ENCODE measurements at regions of chr14 and their contacts with region 1.

Region 1: DNA sequence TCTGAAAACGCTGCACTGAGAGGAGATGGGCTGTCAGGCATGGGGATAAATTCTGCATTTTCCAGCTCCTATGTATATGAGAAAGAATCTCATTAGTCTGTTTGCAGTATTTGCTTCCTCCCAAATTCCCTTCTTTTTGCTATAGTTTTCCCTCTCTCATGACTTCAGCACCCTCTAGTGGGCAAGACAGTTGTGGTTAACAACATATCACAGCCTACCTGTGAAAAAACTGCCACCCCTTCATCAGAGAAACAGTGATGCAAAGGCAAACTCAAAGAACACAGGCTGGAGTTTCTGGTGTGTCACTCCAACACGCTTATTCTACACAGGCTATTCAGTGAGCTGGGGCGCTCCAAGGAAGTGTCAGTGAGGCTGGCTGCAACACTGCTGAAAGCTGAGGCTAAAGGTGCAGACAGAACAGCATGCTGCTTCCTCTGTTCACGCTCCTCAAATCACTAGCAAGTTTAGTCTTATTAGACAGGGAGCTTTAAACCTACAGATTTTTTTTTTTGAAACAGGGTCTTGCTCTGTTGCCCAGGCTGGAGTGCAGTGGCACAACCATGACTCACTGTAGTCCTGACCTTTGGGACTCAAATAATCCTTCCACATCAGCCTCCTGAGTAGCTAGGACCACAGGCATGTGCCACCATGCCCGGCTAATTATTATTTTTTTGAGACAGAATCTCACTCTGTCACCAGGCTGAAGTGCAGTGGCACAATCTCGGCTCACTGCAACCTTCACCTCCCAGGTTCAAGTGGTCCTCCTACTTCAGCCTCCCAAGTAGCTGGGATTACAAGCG is 19.3 kb downstream of the ZC2HC1C start:
- DNase-seq: peak; percentile 35
- H3K4me3 Mint-ChIP-seq: no peak overlapping the region
- H3K27ac Mint-ChIP-seq: no peak overlapping the region
- H3K4me1 Mint-ChIP-seq: no peaks in the 10 kb centered on the region
- H3K27me3 Mint-ChIP-seq: no peaks in the 10 kb centered on the region

Region 2: GRCh38 chr14:74860906-74861733 is 227.7 kb before region 1 on chr14:
- CTCF ChIA-PET with region 1: interaction called, 99 read pairs
- POLR2A ChIA-PET with region 1: no interaction called
- DNase-seq: peak; percentile 91
- H3K4me3 Mint-ChIP-seq: no peak overlapping the region
- H3K27ac Mint-ChIP-seq: no peak overlapping the region
- H3K4me1 Mint-ChIP-seq: peaks cover under 1% of the 10 kb centered on the region
- H3K27me3 Mint-ChIP-seq: no peaks in the 10 kb centered on the region

Region 3: GRCh38 chr14:74955229-74956026 is 133.3 kb before region 1 on chr14 and contains the start of gene PGF:
- CTCF ChIA-PET with region 1: interaction called, 15 read pairs
- POLR2A ChIA-PET with region 1: no interaction called
- DNase-seq: peak; percentile 37
- H3K4me3 Mint-ChIP-seq: peak within 1 kb of the TSS; percentile 46
- H3K27ac Mint-ChIP-seq: no peak within 1 kb of the TSS
- H3K4me1 Mint-ChIP-seq: peaks cover 3% of the 10 kb centered on the region
- H3K27me3 Mint-ChIP-seq: peaks cover 8% of the 10 kb centered on the region
- total RNA-seq, gene PGF: 0.23 to 0.38 TPM

Region 4: DNA sequence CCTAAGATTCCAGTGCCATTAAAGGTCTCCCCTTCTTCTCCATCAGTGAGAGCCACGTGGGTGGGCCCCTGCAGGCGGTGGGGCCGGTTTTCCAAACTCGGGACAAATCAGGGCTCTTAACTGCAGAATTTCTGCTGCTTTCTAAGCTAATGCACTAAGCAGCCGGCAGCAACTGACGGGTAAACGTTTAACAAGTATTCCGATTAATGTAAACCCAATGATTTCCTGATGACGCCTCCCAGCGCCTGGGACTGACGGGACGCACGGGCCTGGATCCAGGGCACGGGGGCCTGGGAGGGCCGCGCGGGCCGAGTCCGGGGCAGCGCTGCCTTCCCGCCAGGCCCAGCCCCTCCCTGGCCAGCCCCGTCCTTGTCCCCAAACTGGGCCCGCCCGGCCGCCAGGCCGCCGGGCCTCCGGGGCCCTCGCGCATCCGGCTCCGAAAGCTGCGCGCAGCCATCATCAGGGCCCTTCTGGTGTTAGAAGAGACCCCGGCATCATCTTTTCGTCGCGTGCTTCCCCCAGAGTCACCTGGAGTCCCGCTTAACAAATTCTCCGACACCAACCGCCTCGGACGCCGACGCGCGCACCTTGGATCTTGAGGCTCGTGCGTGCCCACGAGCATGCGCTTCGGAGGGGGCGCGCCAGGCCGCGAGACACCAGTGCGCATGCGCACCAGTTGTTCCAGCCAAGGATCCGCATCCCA is 37.8 kb before region 1 on chr14 and contains the start of gene MLH3:
- CTCF ChIA-PET with region 1: interaction called, 12 read pairs
- POLR2A ChIA-PET with region 1: no interaction called
- DNase-seq: peak; percentile 79
- H3K4me3 Mint-ChIP-seq: peak within 1 kb of the TSS; percentile 84
- H3K27ac Mint-ChIP-seq: peak within 1 kb of the TSS; percentile 73
- H3K4me1 Mint-ChIP-seq: peaks cover 68% of the 10 kb centered on the region
- H3K27me3 Mint-ChIP-seq: no peaks in the 10 kb centered on the region
- total RNA-seq, gene MLH3: 16.0 to 16.6 TPM

Region 5: DNA sequence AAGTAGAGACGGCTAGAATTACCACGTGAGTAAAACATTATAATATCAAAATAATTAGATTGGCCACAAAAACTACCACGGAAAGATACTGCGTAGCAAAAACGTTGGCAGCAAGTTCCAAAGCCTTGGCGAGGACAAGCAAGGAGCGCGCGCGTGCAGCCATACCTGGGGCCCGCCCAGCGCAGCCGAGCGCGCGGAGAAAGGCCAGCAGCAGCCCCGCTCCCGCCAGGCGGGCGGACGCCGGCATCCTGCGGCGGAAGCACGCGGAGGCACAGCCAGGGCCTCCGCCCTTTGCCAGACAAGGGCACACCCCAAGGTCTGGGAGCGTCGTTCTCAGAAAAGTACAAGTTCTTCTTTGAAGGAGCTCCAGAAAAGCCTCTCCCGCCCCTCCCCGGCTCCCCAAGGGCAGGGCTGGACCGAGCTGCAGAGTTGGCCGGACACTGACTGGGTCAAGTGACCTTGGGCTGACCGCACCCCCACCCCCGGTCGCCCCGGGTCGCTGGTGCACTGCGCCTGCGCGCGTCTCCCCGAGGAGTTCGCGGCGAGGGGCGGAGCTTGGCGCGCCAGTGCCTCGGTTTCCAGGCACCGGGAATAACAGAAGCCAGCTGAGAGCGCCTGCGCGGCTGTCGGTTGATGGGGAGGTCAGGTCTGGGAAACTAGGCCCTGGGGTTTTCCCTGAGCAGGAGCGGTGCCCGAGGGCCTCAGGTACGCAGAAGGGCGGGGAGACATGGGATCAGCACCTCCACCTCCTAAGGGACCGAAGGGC is 19.5 kb before region 1 on chr14 and contains the start of gene ZC2HC1C:
- CTCF ChIA-PET with region 1: interaction called, 16 read pairs
- POLR2A ChIA-PET with region 1: interaction called, 8 read pairs
- DNase-seq: peak; percentile 73
- H3K4me3 Mint-ChIP-seq: peak within 1 kb of the TSS; percentile 22
- H3K27ac Mint-ChIP-seq: no peak within 1 kb of the TSS
- H3K4me1 Mint-ChIP-seq: peaks cover 17% of the 10 kb centered on the region
- H3K27me3 Mint-ChIP-seq: no peaks in the 10 kb centered on the region
- total RNA-seq, gene ZC2HC1C: 2.0 to 2.4 TPM

Region 6: DNA sequence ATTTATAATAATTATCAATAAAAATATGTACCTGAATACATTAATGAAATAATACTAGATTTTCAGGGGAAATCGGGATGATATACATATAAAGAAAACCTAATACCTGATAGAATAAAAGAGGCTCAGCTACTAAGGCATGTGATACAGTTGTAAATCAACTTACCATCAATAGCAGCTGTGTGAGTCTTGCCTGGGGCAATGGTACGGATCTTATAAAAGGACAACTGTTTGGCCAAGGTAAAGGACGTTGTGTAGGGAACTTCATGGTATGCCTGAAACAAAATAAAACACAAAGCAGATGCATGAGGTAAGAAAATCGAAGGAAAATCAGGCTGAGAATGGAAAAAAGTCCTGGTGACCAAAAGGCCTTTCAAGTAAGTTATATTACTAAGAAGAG is 12.7 kb after region 1 on chr14:
- CTCF ChIA-PET with region 1: interaction called, 12 read pairs
- POLR2A ChIA-PET with region 1: no interaction called
- DNase-seq: no peak
- H3K4me3 Mint-ChIP-seq: no peak overlapping the region
- H3K27ac Mint-ChIP-seq: no peak overlapping the region
- H3K4me1 Mint-ChIP-seq: no peaks in the 10 kb centered on the region
- H3K27me3 Mint-ChIP-seq: no peaks in the 10 kb centered on the region

Measured in activated CD4-positive, alpha-beta memory T cell treated with anti-CD3 and anti-CD28 coated beads, Interleukin-2, amount 10 ng/mL, durations not matched to agents 7 days and 5 days (primary cell).